MCF 10A (cell line): ENCODE measurements at regions of chr18 and their contacts with region 1.

Region 1: GRCh38 chr18:75041586-75041985 is 167.4 kb downstream of the PTGR3 start:
- DNase-seq: peak; percentile 36
- H3K4me3 Mint-ChIP-seq: no peak overlapping the region
- H3K27ac Mint-ChIP-seq: no peak overlapping the region
- H3K4me1 Mint-ChIP-seq: no peaks in the 10 kb centered on the region
- H3K27me3 Mint-ChIP-seq: no peaks in the 10 kb centered on the region
- CTCF ChIP-seq: peak; percentile 32

Region 2: GRCh38 chr18:74353169-74353775 is 688.3 kb before region 1 on chr18:
- CTCF ChIA-PET with region 1: no interaction called
- POLR2A ChIA-PET with region 1: no interaction called
- intact Hi-C with region 1: no loop called
- DNase-seq: peak; percentile 61
- H3K4me3 Mint-ChIP-seq: no peak overlapping the region
- H3K27ac Mint-ChIP-seq: no peak overlapping the region
- H3K4me1 Mint-ChIP-seq: no peaks in the 10 kb centered on the region
- H3K27me3 Mint-ChIP-seq: peaks cover 40% of the 10 kb centered on the region
- CTCF ChIP-seq: peak; percentile 55

Region 3: GRCh38 chr18:74896390-74896991 is 145.1 kb before region 1 on chr18:
- CTCF ChIA-PET with region 1: interaction called, 11 read pairs
- POLR2A ChIA-PET with region 1: no interaction called
- intact Hi-C with region 1: loop called (anchors 1 kb)
- DNase-seq: peak; percentile 60
- H3K4me3 Mint-ChIP-seq: no peak overlapping the region
- H3K27ac Mint-ChIP-seq: no peak overlapping the region
- H3K4me1 Mint-ChIP-seq: peaks cover 19% of the 10 kb centered on the region
- H3K27me3 Mint-ChIP-seq: no peaks in the 10 kb centered on the region
- CTCF ChIP-seq: peak; percentile 52

Region 4: GRCh38 chr18:74929110-74929509 is 112.5 kb before region 1 on chr18:
- CTCF ChIA-PET with region 1: no interaction called
- POLR2A ChIA-PET with region 1: no interaction called
- intact Hi-C with region 1: no loop called
- DNase-seq: no peak
- H3K4me3 Mint-ChIP-seq: no peak overlapping the region
- H3K27ac Mint-ChIP-seq: no peak overlapping the region
- H3K4me1 Mint-ChIP-seq: no peaks in the 10 kb centered on the region
- H3K27me3 Mint-ChIP-seq: no peaks in the 10 kb centered on the region
- CTCF ChIP-seq: no peak

Region 5: DNA sequence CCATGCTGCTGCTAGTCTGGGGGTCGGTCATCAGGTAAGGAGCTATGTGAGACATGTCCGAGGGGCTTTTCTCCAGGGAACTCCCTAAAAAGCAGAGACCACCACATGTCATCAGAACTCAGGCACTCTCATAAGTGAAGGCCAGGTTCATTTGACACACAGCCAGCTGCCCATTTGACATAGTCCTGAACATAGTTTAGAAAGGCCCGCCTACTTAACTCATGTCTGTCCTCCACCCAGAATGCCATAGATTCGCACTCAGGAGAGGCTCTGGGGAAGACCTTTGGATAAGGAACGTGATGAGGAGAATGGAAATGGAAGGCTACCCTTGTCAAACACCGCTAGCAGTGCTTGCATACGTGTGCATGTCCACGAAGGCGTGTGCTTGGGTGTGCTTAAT is 10.2 kb after region 1 on chr18:
- CTCF ChIA-PET with region 1: interaction called, 24 read pairs
- POLR2A ChIA-PET with region 1: no interaction called
- intact Hi-C with region 1: no loop called
- DNase-seq: no peak
- H3K4me3 Mint-ChIP-seq: no peak overlapping the region
- H3K27ac Mint-ChIP-seq: no peak overlapping the region
- H3K4me1 Mint-ChIP-seq: no peaks in the 10 kb centered on the region
- H3K27me3 Mint-ChIP-seq: no peaks in the 10 kb centered on the region
- CTCF ChIP-seq: no peak

Region 6: DNA sequence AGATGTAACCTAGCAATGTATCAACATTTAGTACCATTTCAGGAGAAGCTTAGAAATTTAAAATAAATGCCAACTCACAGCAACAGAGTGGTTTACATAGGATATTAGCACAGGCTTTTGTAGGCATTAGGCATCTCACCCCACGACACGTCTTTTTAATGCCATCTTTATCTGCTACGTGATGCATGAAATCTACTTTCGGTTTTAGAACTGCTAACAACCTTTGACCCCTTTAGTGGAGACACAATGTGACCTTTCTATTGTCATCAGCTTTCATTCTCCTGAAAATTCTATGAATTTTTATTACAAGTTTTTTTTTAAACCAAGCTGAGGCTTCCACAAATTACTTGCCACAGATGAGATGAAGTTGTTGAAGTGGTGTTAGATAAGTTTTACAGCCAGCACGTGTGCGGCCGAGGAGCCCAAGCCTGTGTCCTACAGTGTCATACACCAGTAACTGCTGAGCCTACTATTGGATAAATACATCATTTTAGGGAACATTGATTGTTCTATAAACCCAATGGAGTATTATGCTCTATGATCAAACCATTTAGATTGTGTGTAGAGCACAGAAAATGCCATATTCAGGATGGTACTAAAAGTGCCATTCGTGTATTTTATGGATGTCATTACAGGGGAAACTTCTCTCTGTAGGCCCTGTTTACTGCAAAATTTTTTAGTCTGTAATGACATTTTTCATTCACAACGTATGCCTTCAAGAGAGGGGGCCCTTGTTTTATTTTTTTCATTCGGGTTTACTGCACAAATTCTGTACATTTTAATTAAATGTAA is 15.8 kb after region 1 on chr18:
- CTCF ChIA-PET with region 1: interaction called, 24 read pairs
- POLR2A ChIA-PET with region 1: no interaction called
- intact Hi-C with region 1: no loop called
- DNase-seq: no peak
- H3K4me3 Mint-ChIP-seq: no peak overlapping the region
- H3K27ac Mint-ChIP-seq: no peak overlapping the region
- H3K4me1 Mint-ChIP-seq: no peaks in the 10 kb centered on the region
- H3K27me3 Mint-ChIP-seq: no peaks in the 10 kb centered on the region
- CTCF ChIP-seq: no peak

Region 7: DNA sequence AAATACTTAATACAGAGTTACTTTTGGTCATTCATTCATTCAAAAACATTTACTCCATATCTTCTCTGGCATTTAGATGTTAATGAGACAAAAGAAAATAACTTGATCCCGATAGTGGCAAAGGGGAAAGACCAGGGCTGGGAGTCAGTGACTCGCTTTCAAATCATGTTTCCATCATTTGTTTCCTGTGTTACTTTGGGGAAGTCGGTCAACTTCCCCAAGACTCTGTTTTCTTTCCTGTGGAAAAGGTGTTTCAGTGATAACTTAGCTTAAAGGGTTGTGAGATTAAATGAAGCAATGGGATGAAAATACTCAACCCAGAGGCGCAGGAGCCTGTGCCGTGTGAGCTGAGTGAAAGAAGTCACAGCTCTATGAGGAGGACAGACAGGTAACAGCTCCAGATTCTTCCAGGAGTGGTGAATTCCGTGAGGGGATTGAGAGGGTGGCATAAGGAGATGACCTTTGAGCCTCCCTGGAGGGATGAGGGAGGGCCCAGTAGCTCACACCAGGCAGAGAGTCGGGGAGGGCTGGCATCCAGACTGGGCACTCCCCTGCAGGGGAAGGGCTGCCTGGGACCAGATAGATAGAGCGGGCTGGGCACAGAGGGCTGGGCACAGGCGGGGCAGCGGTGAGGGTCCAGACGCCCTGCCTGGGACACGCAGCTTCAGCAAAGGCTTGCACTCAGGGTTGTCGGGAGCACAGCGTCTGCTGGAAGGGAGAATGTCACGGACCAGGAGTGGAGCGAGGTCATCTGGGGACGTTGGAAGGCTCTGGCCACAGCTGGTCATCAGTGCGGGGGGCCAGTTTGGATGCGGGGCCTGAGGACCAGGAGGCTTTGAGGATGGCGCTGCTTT is 239.1 kb after region 1 on chr18:
- CTCF ChIA-PET with region 1: no interaction called
- POLR2A ChIA-PET with region 1: no interaction called
- intact Hi-C with region 1: no loop called
- DNase-seq: no peak
- H3K4me3 Mint-ChIP-seq: no peak overlapping the region
- H3K27ac Mint-ChIP-seq: peak overlapping the region; percentile 65
- H3K4me1 Mint-ChIP-seq: peaks cover 12% of the 10 kb centered on the region
- H3K27me3 Mint-ChIP-seq: no peaks in the 10 kb centered on the region
- CTCF ChIP-seq: no peak